Dorsolateral prefrontal cortex (tissue), 120 donors: ENCODE measurements at regions of chr14 and their contacts with region 1.

Region 1: GRCh38 chr14:50860478-50861086 is 11.3 kb upstream of the ABHD12B start:
- DNase-seq: peak; percentile 72 to 92 (median 80)
- H3K4me3 ChIP-seq: peak overlapping the region; percentile 40 to 90 (median 66)
- H3K27ac ChIP-seq: peak overlapping the region; percentile 50 to 95 (median 89)
- H3K27me3 ChIP-seq: no peaks in the 10 kb centered on the region
- CTCF ChIP-seq: peak; percentile 62 to 91 (median 84)

Region 2: GRCh38 chr14:50599700-50600444 is 260.7 kb before region 1 on chr14:
- intact Hi-C with region 1: loop called in 1 of 2 experiments (anchors 5 kb)
- DNase-seq: no peak
- H3K4me3 ChIP-seq: no peak overlapping the region
- H3K27ac ChIP-seq: peak overlapping the region in 45 of 59 donors; percentile 3 to 83 (median 62)
- H3K27me3 ChIP-seq: no peaks in the 10 kb centered on the region
- CTCF ChIP-seq: peak; percentile 43 to 88 (median 70)

Region 3: GRCh38 chr14:50778721-50779483 is 81.7 kb before region 1 on chr14:
- intact Hi-C with region 1: loop called (anchors 2 kb)
- DNase-seq: no peak
- H3K4me3 ChIP-seq: no peak overlapping the region
- H3K27ac ChIP-seq: peak overlapping the region in 27 of 59 donors; percentile 6 to 65 (median 34)
- H3K27me3 ChIP-seq: no peaks in the 10 kb centered on the region
- CTCF ChIP-seq: no peak

Region 4: GRCh38 chr14:50830932-50831725 is 29.5 kb before region 1 on chr14 and contains the start of gene NIN:
- intact Hi-C with region 1: loop called in 1 of 2 experiments (anchors 2 kb)
- DNase-seq: peak in 9 of 10 donors; percentile 48 to 85 (median 69)
- H3K4me3 ChIP-seq: peak within 1 kb of the TSS; percentile 60 to 95 (median 85)
- H3K27ac ChIP-seq: peak within 1 kb of the TSS; percentile 61 to 98 (median 92)
- H3K27me3 ChIP-seq: no peaks in the 10 kb centered on the region
- CTCF ChIP-seq: peak in 4 of 56 donors; percentile 16 to 23 (median 22)
- total RNA-seq, gene NIN: 64.4 to 125 (median 88.6) TPM

Region 5: GRCh38 chr14:50943943-50944646 is 83.5 kb after region 1 on chr14 and contains the start of gene PYGL:
- intact Hi-C with region 1: loop called in 1 of 2 experiments (anchors 5 kb)
- DNase-seq: peak in 5 of 10 donors; percentile 12 to 68 (median 36)
- H3K4me3 ChIP-seq: peak within 1 kb of the TSS; percentile 52 to 86 (median 76)
- H3K27ac ChIP-seq: peak within 1 kb of the TSS in 29 of 59 donors; percentile 5 to 85 (median 43)
- H3K27me3 ChIP-seq: no peaks in the 10 kb centered on the region
- CTCF ChIP-seq: peak in 1 of 56 donors; percentile 31
- total RNA-seq, gene PYGL: 3.2 to 42.6 (median 13.0) TPM

Region 6: DNA sequence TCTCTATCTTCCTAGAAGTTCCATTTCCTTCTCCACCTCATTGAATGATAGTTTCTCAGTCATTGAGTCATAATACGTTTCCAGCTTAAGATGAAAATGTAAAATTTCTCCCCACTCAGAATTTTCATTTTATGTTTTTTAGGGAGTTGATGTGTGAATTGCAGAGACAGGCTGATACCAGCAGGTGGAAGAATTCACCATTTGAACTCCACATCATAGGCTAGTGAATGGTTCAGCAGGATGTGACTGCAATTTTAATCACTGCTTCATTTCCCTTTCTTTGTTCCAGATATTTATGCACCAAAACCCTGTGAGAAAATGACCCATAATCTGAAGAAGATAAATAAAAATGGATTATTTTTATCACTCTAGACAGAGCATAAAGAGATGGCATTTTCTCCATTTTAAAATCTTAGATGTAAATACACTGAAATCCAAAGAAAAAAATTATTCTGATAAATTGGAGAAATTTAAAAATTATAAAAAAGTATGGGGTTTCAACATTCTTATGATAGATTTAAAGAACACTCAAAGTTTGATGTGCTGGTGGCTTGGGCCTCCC is 94.3 kb after region 1 on chr14:
- intact Hi-C with region 1: no loop called
- DNase-seq: peak in 2 of 10 donors; percentile 28 to 30
- H3K4me3 ChIP-seq: no peak overlapping the region
- H3K27ac ChIP-seq: peak overlapping the region in 42 of 59 donors; percentile 6 to 74 (median 48)
- H3K27me3 ChIP-seq: no peaks in the 10 kb centered on the region
- CTCF ChIP-seq: peak; percentile 42 to 87 (median 78)